Cardiac septum (tissue), 1 donor: ENCODE measurements at regions of chr17 and their contacts with region 1.

Region 1: DNA sequence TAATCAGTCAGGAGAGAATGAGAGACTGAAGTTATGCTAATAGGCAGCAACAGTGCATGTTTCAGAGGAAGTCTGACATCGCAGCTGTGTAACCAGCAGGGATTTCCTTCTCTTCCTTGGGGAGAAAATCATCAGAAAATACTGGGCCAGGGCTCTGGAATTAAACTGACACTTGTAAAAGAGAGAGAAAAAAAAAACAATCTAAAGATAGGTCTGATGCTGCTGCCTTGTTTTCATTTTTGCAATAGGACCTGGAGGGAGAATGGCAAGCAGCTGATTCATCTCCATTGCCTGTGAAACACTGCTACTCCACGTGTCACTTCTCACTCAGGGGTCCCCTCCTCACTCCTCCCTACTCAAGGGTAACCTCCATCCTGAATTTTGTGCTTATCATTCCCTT is 17.7 kb upstream of the CORO6 start:
- DNase-seq: no peak

Region 2: GRCh38 chr17:29622337-29623282 is 17.8 kb before region 1 on chr17 and contains the start of gene CORO6:
- intact Hi-C with region 1: loop called (anchors 2 kb)
- DNase-seq: peak; percentile 80
- total RNA-seq, gene CORO6: 128 TPM

Region 3: DNA sequence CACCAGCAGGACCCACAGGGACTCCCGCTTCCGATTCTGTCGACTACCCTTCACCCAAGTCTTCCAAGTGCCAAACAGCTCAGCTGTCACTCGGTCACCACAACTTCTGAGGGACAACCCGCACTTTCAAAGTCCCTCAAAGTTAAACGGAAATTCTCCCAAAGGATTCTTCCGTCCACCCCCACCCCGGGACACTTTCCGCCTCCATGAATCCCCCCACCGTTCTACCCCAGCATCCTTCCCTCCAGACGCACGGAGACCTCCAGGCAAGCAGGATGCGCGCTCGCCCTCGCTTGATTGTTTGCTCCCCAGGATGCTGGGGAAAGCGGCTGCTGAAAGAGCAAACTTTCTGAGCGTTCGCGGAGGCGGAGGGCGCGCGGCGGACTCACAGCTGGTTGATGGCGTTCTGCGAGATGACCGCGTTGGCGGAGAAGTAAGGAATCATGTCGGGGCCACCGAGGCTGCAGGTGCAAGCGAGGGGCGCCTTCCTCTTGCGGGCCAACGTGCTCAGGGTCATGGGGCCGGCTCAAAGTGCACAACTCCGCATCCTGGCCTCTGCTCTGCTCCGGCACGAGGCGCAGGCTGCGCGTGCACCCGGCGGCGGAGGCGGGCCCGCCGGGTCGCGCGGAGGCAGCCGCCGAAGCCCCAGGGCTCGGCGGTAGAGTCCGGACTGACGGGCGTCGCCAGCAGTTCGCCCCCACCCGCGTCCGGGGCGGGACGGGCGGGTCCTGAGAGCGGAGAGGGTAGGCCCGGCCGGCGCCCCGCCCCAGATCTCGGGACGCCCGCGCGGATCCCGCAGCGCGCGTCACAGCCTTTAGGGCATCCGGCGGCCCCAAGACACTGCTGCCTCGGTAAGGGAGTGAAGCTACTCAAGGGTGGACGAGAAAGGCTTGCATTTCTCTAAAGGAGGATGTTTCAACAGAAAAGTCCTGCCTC is 120.6 kb after region 1 on chr17:
- intact Hi-C with region 1: loop called (anchors 2 kb)
- DNase-seq: peak; percentile 96

Region 4: DNA sequence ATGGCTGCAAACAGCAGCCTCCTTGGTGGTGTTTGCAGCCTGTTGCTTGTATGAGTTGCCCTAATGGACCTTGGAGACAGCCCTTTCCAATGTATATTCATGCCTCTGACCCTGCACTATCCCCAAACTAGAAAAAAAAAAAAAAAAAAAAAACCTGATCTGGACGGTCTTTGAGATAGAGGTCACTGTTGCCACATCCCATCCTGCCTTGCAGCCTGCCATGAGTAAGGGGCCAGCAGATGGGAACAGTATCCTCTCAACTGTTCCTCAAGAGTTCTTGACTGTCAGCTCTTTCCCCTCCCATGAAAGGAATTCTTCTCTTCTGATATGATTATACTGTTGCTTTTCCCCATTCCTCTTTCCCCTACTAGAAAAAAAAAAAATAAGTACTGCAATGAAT is 137.2 kb after region 1 on chr17:
- intact Hi-C with region 1: loop called (anchors 1 kb)
- DNase-seq: no peak